Body of pancreas (tissue), 4 donors: ENCODE measurements at regions of chr17 and their contacts with region 1.

Region 1: GRCh38 chr17:75673487-75673886 is 6.3 kb downstream of the SAP30BP start:
- DNase-seq: no peak
- ATAC-seq: no peak
- H3K4me3 ChIP-seq: no peak overlapping the region
- H3K27ac ChIP-seq: no peak overlapping the region
- H3K4me1 ChIP-seq: peaks cover 16% of the 10 kb centered on the region
- H3K27me3 ChIP-seq: no peaks in the 10 kb centered on the region
- CTCF ChIP-seq: no peak
- POLR2A ChIP-seq: no peak

Region 2: DNA sequence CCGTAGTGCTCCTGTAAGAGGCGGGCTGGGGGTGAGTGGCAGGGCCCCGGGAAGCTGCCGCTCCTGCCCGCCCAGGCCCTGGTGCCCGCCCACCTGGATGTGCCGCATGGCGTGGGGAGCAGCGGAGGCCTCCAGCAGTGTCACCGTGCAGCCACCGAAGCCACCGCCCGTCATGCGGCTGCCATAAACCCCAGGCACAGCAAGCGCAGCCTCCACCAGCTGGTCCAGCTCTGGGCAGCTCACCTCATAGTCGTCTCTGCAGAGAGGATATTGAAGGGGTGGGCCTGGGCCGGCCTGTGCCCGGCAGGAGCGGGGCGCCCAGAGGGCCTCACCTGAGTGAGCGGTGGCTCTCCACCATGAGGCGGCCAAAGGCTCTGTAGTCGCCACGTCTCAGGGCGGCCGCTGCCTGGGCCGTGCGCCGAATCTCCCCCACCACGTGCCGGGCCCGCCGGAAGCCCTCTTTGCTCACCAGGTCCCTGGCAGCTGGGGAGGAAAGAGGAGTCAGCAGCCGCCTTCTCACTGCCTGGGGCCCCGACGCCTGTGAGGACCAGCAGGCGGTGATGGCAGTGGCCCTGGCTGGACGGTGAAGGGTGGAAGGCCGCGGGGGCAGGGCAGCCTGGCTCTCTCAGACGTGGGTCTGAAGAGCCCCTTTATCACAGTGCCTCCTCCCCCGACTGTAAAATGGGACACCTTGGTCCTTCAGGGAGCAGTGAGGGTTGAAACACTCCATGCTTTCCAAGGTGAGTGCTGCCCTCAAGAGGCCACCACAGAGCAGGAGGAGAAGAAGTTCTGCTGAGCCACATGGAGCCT is 84.8 kb after region 1 on chr17:
- intact Hi-C with region 1: loop called (anchors 5 kb)
- DNase-seq: no peak
- ATAC-seq: no peak
- H3K4me3 ChIP-seq: no peak overlapping the region
- H3K27ac ChIP-seq: no peak overlapping the region
- H3K4me1 ChIP-seq: peaks cover 15% of the 10 kb centered on the region
- H3K27me3 ChIP-seq: no peaks in the 10 kb centered on the region
- CTCF ChIP-seq: no peak
- POLR2A ChIP-seq: no peak

Region 3: DNA sequence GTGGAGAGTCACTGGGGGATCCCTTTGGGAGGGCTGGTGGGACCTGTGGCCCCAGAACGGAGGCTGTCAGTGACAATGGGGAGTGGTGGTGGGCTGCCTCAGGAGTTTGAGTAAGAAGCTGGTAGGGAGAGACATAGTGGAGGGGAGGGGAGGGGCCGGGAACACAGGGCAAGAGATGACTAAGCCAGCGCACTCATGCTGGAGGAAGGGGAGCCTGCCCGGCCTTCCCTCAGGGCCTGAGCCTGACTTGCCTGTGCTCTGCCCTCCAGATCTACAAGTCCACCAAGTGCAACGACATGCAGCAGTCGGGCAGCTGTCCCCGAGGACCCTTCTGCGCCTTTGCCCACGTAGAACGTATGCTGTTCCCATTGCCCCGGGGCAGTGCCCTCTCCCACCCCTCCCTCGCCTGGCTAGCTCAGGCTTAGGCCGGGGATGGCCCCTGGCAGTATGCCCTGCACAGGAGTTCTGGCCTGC is 141.4 kb after region 1 on chr17:
- intact Hi-C with region 1: no loop called
- DNase-seq: no peak
- ATAC-seq: no peak
- H3K4me3 ChIP-seq: no peak overlapping the region
- H3K27ac ChIP-seq: no peak overlapping the region
- H3K4me1 ChIP-seq: no peaks in the 10 kb centered on the region
- H3K27me3 ChIP-seq: no peaks in the 10 kb centered on the region
- CTCF ChIP-seq: no peak
- POLR2A ChIP-seq: no peak

Region 4: DNA sequence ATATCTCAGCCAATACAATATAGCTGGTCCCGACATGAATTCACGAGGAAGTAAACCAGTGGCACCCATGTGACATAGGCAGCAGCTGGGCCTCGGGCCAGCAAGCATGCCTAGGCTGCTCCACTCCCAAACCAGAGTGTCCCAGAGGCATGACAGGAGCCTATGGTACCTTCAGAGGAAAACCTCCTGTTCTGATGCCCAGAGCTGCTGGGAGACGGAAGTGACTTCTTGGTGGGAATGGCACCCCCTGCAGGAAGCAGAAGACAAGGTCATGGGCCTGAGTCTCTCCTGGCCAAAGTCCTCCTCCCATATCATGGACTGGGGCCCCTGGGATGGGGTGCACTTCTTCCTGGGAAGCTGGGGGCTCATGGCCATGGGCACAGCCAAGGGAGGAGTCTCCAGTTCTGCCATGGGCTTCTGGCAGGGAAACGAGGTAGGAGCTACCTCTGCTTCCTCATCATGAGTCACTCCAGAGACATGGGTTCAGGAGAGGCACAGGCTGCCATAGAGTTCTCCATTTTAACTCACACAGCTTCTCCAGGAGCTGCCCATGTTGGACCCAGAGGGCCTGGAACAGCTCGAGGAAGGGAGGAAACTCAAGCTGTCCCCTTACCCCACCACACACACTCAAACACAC is 253.9 kb after region 1 on chr17:
- intact Hi-C with region 1: no loop called
- DNase-seq: peak in 2 of 4 donors; percentile 33
- ATAC-seq: no peak
- H3K4me3 ChIP-seq: no peak overlapping the region
- H3K27ac ChIP-seq: no peak overlapping the region
- H3K4me1 ChIP-seq: no peaks in the 10 kb centered on the region
- H3K27me3 ChIP-seq: no peaks in the 10 kb centered on the region
- CTCF ChIP-seq: peak in 3 of 7 experiments; percentile 16 to 27 (median 27)
- POLR2A ChIP-seq: no peak